ENCODE measurements at regions of chr13 and their contacts with region 1.

Region 1: GRCh38 chr13:33723772-33724435 is 94.0 kb upstream of the RFC3 start:
- DNase-seq: peak; percentile 84
- ATAC-seq: peak; percentile 96
- H3K4me3 ChIP-seq: no peak overlapping the region
- H3K27ac ChIP-seq: no peak overlapping the region
- H3K4me1 ChIP-seq: 0 out of 2 replicates have a peak, but pooled peaks cover 15% of the 10 kb centered on the region
- H3K27me3 ChIP-seq: no peaks in the 10 kb centered on the region
- CTCF ChIP-seq: peak; percentile 84

Region 2: GRCh38 chr13:32586080-32586900 is 1137.6 kb before region 1 on chr13 and contains the start of gene PDS5B:
- CTCF ChIA-PET with region 1: no interaction called
- POLR2A ChIA-PET with region 1: no interaction called
- intact Hi-C with region 1: loop called (anchors 10 kb)
- DNase-seq: peak; percentile 92
- ATAC-seq: peak; percentile 84
- H3K4me3 ChIP-seq: peak within 1 kb of the TSS; percentile 96
- H3K27ac ChIP-seq: peak within 1 kb of the TSS; percentile 63
- H3K4me1 ChIP-seq: peaks cover 23% of the 10 kb centered on the region
- H3K27me3 ChIP-seq: no peaks in the 10 kb centered on the region
- CTCF ChIP-seq: peak; percentile 74
- total RNA-seq, gene PDS5B: 19.5 and 20.3 TPM in 2 replicates

Region 3: DNA sequence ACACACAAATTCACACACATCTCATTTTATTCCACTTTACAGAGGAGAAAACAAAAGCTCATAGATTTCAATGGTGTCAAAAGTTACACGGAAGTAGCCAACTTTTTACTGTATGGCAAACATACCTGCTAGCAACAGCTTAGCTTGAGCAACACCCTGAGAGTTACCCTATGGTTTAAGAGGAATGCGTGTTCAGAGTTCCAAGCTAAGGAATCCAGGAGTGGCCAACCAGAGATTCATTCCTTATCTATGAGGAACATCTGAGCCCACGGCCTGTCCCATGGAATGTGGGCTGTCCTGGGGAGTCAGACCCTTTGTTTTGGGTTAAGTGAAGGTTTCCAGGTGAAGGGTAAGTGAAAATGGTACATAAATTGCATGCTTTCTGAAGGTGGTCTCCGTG is 505.9 kb before region 1 on chr13:
- CTCF ChIA-PET with region 1: no interaction called
- POLR2A ChIA-PET with region 1: no interaction called
- intact Hi-C with region 1: loop called (anchors 10 kb)
- DNase-seq: peak; percentile 88
- ATAC-seq: peak; percentile 83
- H3K4me3 ChIP-seq: peak overlapping the region; percentile 23; the same call in 1 of the 2 replicates
- H3K27ac ChIP-seq: peak overlapping the region; percentile 90
- H3K4me1 ChIP-seq: peaks cover 28% of the 10 kb centered on the region
- H3K27me3 ChIP-seq: no peaks in the 10 kb centered on the region
- CTCF ChIP-seq: no peak

Region 4: DNA sequence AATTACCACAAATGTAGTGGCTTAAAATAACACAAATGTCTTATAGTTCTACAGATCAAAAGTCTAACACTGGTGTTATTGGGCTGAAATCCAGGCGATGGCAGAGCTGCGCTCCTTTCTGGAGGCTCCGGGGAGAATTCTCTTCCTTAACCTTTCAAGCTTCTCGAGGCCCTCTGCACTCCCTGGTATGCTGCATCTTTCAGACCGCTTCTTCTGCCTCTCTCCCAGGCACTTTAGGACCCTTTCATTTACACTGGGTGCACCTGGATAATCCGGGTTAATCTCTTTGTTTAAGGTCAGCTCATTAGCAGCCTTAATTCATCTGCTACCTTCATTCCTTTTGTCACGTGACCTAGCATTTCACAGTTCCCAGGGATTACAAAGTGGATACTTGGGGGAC is 117.2 kb before region 1 on chr13:
- CTCF ChIA-PET with region 1: no interaction called
- POLR2A ChIA-PET with region 1: no interaction called
- intact Hi-C with region 1: loop called (anchors 5 kb)
- DNase-seq: no peak
- ATAC-seq: no peak
- H3K4me3 ChIP-seq: no peak overlapping the region
- H3K27ac ChIP-seq: no peak overlapping the region
- H3K4me1 ChIP-seq: no peaks in the 10 kb centered on the region
- H3K27me3 ChIP-seq: no peaks in the 10 kb centered on the region
- CTCF ChIP-seq: no peak

Region 5: GRCh38 chr13:33678906-33679657 is 44.8 kb before region 1 on chr13:
- CTCF ChIA-PET with region 1: no interaction called
- POLR2A ChIA-PET with region 1: no interaction called
- intact Hi-C with region 1: loop called (anchors 5 kb)
- DNase-seq: peak; percentile 90
- ATAC-seq: peak; percentile 88
- H3K4me3 ChIP-seq: peak overlapping the region; percentile 46
- H3K27ac ChIP-seq: peak overlapping the region; percentile 96
- H3K4me1 ChIP-seq: peaks cover 30% of the 10 kb centered on the region
- H3K27me3 ChIP-seq: no peaks in the 10 kb centered on the region
- CTCF ChIP-seq: no peak

Region 6: GRCh38 chr13:33690354-33690753 is 33.5 kb before region 1 on chr13:
- CTCF ChIA-PET with region 1: no interaction called
- POLR2A ChIA-PET with region 1: interaction called, 3 read pairs
- intact Hi-C with region 1: loop called (anchors 1 kb)
- DNase-seq: no peak
- ATAC-seq: no peak
- H3K4me3 ChIP-seq: no peak overlapping the region
- H3K27ac ChIP-seq: no peak overlapping the region
- H3K4me1 ChIP-seq: no peaks in the 10 kb centered on the region
- H3K27me3 ChIP-seq: no peaks in the 10 kb centered on the region
- CTCF ChIP-seq: no peak

Measured in PC-3 (cell line).